Head of caudate nucleus (tissue), 42 donors: ENCODE measurements at regions of chr3 and their contacts with region 1.

Region 1: DNA sequence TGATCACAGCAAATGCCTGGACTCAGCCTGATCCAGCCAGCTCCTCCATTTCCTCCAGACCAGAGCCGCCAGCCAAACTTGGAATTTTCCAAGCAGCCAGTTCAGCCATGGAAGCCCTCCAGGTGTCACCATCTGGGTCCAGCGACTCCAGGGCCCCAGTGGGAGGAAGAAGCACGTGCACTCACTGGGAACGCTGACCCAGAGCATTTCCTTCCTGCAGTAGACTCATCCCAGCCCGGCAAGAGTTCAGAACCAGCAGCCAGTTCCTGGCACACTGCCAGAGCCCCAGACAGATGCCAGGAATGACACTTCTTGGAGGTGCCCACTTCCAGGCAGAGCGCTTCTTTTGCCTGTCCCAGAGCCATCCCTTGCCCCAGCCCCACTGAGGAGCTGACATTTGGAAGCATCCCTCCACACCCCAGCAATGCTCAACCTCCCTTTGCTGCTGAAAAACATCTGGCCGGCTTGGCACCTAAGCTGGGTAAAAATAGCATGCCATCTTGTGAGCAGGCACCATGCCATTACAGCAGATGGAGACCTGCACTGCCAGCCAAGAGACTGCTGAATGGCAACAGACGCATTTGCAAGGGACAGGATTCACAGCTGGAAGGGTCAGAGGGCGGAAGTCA is 460.3 kb upstream of the PROK2 start:
- DNase-seq: peak in 39 of 42 donors; percentile 41 to 88 (median 69)

Region 2: DNA sequence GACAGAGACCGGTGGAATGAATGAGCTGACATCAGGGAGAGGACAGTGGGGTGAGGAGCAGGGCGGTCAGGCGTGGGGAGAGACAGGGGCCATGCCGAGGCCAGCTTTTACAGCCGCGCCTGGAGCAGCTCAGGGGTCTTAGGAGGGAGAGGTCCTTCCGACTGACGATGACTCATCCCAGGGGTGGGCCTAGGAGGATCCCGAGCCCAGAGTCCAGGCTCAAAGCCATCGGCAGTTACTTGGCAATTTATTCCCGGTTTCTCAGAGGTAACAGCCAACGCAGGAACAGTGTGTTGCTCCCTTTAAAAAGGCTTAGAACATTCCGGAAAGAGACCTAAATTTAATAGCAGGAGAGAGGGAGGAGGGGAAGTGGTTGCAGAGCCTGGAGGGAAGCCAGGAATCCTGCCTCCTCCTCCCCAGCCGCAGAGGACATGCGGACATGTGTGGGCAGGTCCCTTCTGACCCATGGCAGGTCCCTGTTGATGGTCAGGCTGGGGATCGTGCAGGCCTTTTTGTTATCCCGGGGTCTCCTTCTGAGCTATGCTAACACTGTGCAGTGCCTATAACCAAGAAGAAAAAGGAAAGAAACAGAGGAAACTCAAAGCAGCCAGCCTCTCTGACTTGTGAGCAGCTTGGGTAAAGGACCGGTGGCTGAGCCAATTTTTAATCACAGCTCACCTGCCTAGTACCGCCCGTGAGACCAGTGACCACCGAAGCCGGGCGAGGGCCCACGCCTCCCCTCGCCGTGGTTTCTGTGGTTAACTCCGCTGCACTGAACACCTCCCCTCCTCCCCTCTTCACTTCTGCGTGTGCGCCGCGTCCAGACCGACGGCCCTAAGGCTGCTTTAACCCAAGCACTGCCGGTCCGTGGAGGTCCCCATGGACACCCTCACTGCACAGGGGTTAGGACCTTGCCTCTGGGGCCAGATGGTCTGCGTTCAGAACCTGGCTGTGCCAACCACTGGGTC is 67.9 kb before region 1 on chr3:
- intact Hi-C with region 1: loop called (anchors 5 kb)
- DNase-seq: peak in 25 of 42 donors; percentile 24 to 74 (median 49)

Region 3: GRCh38 chr3:72571638-72572208 is 326.4 kb after region 1 on chr3:
- intact Hi-C with region 1: no loop called
- DNase-seq: no peak